Dorsolateral prefrontal cortex (tissue), 120 donors: ENCODE measurements at regions of chr16 and their contacts with region 1.

Region 1: DNA sequence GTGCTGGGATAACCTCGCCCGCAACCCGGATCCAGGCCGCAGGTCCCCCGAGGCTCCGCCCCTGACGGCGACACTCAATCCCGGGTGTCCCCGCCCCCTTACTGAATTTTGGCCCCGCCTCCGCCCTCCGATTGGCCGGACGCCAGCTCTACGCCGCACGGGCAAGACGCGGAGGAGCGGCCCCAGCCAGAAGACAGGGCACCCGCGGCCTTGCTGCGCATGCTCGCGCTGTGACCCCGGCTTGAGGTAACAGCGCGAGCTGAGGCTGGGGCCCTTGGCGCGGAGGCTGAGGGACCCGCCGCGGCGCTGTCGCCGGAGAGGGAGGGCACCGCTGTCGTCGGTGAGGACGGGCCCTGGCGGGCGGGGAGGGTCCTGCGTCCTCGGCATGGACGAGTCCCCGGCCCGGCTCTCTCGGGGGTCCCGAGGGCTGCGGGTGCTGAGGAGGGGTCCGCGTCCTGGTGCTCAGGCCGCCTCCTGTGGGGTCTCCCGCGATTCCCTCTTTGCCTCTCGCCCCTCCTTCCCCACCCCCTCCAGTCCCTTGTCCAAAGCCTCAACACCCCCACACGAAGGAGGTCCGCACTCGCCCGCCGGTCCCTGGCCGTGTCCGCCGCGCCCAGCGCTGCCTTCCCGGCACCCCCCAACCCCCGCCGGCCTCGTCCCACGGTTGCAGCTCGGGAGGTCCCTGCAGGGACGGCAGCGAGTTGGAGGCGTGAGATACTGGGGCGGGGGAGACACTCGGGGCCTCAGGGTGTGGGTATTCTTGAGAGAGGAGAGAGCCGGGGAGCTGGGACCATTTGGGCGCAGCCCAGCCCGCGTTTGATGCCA is at the start of gene FLYWCH2:
- DNase-seq: peak; percentile 96 to 100 (median 98)
- H3K4me3 ChIP-seq: peak within 1 kb of the TSS; percentile 60 to 99 (median 93)
- H3K27ac ChIP-seq: peak within 1 kb of the TSS; percentile 17 to 97 (median 91)
- H3K27me3 ChIP-seq: no peaks in the 10 kb centered on the region
- CTCF ChIP-seq: peak in 33 of 56 donors; percentile 0 to 51 (median 25)
- total RNA-seq, gene FLYWCH2: 19.4 to 46.0 (median 31.2) TPM

Region 2: GRCh38 chr16:2905431-2906387 is 22.5 kb after region 1 on chr16:
- intact Hi-C with region 1: loop called (anchors 1 to 2 kb)
- DNase-seq: peak; percentile 98 to 100 (median 100)
- H3K4me3 ChIP-seq: peak overlapping the region; percentile 53 to 95 (median 83)
- H3K27ac ChIP-seq: peak overlapping the region in 47 of 59 donors; percentile 17 to 99 (median 95)
- H3K27me3 ChIP-seq: no peaks in the 10 kb centered on the region
- CTCF ChIP-seq: peak in 9 of 56 donors; percentile 7 to 36 (median 32)

Region 3: GRCh38 chr16:2919511-2920255 is 36.4 kb after region 1 on chr16:
- intact Hi-C with region 1: loop called in 1 of 2 experiments (anchors 5 kb)
- DNase-seq: peak in 4 of 10 donors; percentile 36 to 71 (median 65)
- H3K4me3 ChIP-seq: peak overlapping the region in 14 of 59 donors; percentile 0 to 36 (median 10)
- H3K27ac ChIP-seq: peak overlapping the region in 57 of 59 donors; percentile 6 to 85 (median 72)
- H3K27me3 ChIP-seq: no peaks in the 10 kb centered on the region
- CTCF ChIP-seq: peak; percentile 86 to 100 (median 93)